ENCODE measurements at regions of chr3 and their contacts with region 1.

Region 1: GRCh38 chr3:121809249-121809648 is 25.6 kb downstream of the IQCB1 start:
- DNase-seq: no peak
- H3K4me3 ChIP-seq: no peak overlapping the region
- H3K27ac ChIP-seq: no peak overlapping the region
- H3K4me1 ChIP-seq: no peaks in the 10 kb centered on the region
- H3K27me3 ChIP-seq: no peaks in the 10 kb centered on the region
- CTCF ChIP-seq: no peak

Region 2: DNA sequence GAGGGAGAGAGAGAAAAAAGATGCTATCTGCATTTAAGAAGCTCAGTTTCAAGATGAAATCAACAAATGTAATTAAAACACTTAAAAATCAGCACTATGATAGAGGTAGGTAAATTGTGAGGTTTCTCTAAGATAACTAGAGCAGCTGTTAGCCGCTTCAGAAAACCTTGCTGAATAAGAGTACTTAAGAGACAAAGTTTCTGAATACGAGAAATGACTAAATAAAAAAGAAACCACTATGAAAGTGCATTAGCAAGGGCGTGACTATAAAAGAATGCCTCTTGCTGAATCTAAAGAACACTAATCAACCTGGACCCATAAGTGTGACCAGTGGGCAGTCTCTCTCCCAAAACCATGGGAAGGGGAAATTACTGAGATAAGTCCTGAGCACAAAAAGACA is 16.2 kb before region 1 on chr3:
- CTCF ChIA-PET with region 1: no interaction called
- POLR2A ChIA-PET with region 1: interaction called, 22 read pairs
- intact Hi-C with region 1: no loop called
- DNase-seq: no peak
- H3K4me3 ChIP-seq: no peak overlapping the region
- H3K27ac ChIP-seq: no peak overlapping the region
- H3K4me1 ChIP-seq: no peaks in the 10 kb centered on the region
- H3K27me3 ChIP-seq: no peaks in the 10 kb centered on the region
- CTCF ChIP-seq: no peak

Region 3: GRCh38 chr3:122668930-122669730 is 859.9 kb after region 1 on chr3:
- CTCF ChIA-PET with region 1: no interaction called
- POLR2A ChIA-PET with region 1: no interaction called
- intact Hi-C with region 1: no loop called
- DNase-seq: peak in 1 of 2 experiments; percentile 73
- H3K4me3 ChIP-seq: no peak overlapping the region
- H3K27ac ChIP-seq: peak overlapping the region; percentile 33; the same call in 1 of the 2 replicates
- H3K4me1 ChIP-seq: 0 out of 2 replicates have a peak, but pooled peaks cover 12% of the 10 kb centered on the region
- H3K27me3 ChIP-seq: no peaks in the 10 kb centered on the region
- CTCF ChIP-seq: no peak

Measured in PC-9 (cell line).